H1 (cell line): ENCODE measurements at regions of chr1 and their contacts with region 1.

Region 1: GRCh38 chr1:26284597-26285360 is 4.9 kb downstream of the SH3BGRL3 start:
- DNase-seq: peak in 1 of 2 experiments; percentile 94
- H3K4me3 ChIP-seq: no peak overlapping the region
- H3K27ac ChIP-seq: no peak overlapping the region
- H3K4me1 ChIP-seq: peaks cover 8 to 32% (median 19%) of the 10 kb centered on the region in 4 experiments
- H3K27me3 ChIP-seq: no peaks in the 10 kb centered on the region
- CTCF ChIP-seq: peak in 2 of 3 experiments; percentile 93 to 97; a peak in 3 of 4 replicates
- EP300 ChIP-seq: no peak
- POLR2A ChIP-seq: no peak
- RAD21 ChIP-seq: peak; percentile 89 to 91

Region 2: DNA sequence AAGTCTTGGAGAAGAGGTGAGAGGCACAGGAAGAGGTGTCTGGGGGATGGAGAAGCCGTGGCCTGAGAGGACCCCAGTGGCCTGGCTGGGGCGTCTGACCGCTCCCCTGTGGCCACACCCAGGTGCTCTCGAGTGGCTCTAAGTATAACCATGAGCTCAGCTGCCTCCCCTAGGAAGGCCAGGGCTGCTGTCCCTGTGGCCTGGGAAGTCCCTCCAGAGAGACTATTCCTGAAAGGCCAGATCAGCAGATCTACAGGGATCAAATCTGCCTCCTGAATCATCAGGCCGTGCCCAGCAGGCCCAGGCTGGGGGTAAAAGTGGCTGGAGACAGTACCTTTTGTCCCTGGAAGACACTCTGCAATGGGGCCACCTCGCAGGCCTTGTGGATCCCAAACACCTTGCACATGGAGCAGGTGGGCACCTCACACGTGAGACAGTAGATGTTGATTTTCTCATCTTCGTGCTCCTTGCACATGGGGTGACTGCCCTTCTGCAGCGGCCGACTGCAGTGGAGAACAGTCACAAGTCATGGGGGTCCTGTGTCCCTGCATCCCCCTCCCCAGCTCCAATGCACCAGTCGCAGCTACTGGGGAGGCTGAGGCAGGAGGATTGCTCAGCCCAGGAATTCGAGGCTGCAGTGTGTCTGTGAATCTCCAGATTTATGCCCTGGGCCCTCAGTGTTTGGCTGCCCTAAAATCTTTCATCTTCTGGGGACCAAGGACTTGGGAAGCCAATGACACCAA is 223.8 kb before region 1 on chr1:
- CTCF ChIA-PET with region 1: no interaction called
- POLR2A ChIA-PET with region 1: no interaction called
- DNase-seq: no peak
- H3K4me3 ChIP-seq: no peak overlapping the region
- H3K27ac ChIP-seq: no peak overlapping the region
- H3K4me1 ChIP-seq: no peaks in the 10 kb centered on the region
- H3K27me3 ChIP-seq: peaks cover 0 to 2% (median 0%) of the 10 kb centered on the region in 4 experiments; a peak in 2 of 7 replicates
- CTCF ChIP-seq: no peak
- EP300 ChIP-seq: no peak
- POLR2A ChIP-seq: no peak
- RAD21 ChIP-seq: no peak

Region 3: GRCh38 chr1:26306290-26307229 is 21.8 kb after region 1 on chr1 and contains the start of gene UBXN11:
- CTCF ChIA-PET with region 1: interaction called, 1,530 read pairs
- POLR2A ChIA-PET with region 1: interaction called, 14 read pairs
- DNase-seq: peak; percentile 78 to 91
- H3K4me3 ChIP-seq: peak within 1 kb of the TSS; percentile 52 to 98 (median 96)
- H3K27ac ChIP-seq: peak within 1 kb of the TSS; percentile 75
- H3K4me1 ChIP-seq: peaks cover 0 to 5% (median 2%) of the 10 kb centered on the region in 4 experiments; a peak in 3 of 7 replicates
- H3K27me3 ChIP-seq: no peaks in the 10 kb centered on the region
- CTCF ChIP-seq: no peak
- EP300 ChIP-seq: no peak
- POLR2A ChIP-seq: peak in 1 of 2 experiments; percentile 55; a peak in 2 of 3 replicates
- RAD21 ChIP-seq: no peak
- total RNA-seq, gene UBXN11: 6.1 and 6.3 TPM in 2 replicates

Region 4: DNA sequence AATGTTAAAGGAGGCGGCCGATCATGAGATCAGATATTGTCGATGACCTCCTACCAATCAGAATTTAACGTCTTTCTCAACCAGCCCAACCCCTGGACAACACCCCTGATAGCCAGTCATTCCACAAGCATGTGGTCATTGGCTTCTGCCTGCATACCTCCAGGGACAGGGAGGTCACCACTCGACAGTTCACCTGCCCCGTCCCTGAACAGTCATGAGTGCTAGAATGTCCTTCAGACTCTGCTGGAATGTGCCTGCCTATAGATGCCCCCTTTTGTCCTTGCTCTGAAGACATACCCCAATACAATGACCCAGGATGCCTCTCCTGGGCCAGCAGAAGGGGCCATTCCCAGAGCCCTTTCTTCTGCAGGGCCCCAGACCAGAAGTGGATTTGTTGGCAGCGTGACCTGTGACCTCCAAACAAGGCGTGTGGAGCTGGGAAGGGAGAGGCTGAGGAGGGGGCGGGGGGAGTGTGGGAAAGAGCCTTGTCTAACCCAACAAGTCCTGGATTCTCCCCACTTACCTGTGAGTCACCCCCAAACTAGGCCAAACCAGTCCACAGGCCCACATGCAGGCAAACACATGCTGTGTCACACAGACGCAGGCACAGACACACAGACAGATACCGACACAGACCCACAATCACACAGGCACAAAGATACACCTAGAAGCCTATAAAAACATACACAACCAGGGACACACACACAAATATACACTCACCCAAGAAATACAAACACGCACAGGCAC is 67.0 kb after region 1 on chr1:
- CTCF ChIA-PET with region 1: interaction called, 27 read pairs
- POLR2A ChIA-PET with region 1: interaction called, 3 read pairs
- DNase-seq: no peak
- H3K4me3 ChIP-seq: no peak overlapping the region
- H3K27ac ChIP-seq: no peak overlapping the region
- H3K4me1 ChIP-seq: peaks cover 7 to 28% (median 10%) of the 10 kb centered on the region in 4 experiments
- H3K27me3 ChIP-seq: no peaks in the 10 kb centered on the region
- CTCF ChIP-seq: no peak
- EP300 ChIP-seq: no peak
- POLR2A ChIP-seq: no peak
- RAD21 ChIP-seq: no peak

Region 5: DNA sequence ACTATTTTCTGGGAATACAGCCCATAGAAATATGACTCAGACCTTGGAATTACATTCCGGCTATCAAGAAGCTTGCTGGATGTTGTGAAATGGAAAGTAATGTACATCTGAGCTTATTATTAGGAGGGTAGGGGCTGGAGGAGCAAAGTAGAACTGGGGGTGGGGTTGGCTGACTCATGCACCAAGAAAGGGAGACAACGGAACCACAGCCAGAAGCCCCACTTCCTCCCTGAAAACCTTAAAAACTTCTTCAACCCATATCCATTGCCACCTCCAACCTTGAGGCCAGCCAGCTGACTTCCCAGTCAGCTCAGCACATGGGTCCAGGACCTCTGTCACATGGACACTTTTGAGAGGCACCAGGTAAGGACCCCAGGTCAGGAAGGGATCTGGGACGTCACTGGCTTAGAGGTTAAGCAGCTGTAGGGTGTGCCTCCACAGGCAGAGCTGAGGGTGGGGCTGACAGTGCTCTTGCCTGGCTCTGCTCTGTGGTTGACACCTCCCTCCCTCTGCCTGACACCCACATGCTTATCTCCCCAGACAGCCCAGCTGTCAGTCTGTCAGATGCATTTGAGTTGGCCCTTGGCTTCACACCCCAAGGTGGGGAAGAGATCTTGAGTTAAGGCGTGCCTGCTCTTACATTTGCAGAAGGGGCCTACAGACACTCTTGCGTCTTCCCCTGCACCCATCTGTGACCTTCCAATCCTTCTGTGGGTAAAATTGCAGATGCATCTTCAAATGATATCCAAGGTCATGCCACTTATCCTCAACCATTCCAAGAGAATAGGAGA is 93.5 kb after region 1 on chr1:
- CTCF ChIA-PET with region 1: interaction called, 21 read pairs
- POLR2A ChIA-PET with region 1: interaction called, 3 read pairs
- DNase-seq: no peak
- H3K4me3 ChIP-seq: no peak overlapping the region
- H3K27ac ChIP-seq: no peak overlapping the region
- H3K4me1 ChIP-seq: peaks cover 0 to 2% (median 0%) of the 10 kb centered on the region in 4 experiments; a peak in 2 of 7 replicates
- H3K27me3 ChIP-seq: no peaks in the 10 kb centered on the region
- CTCF ChIP-seq: no peak
- EP300 ChIP-seq: no peak
- POLR2A ChIP-seq: no peak
- RAD21 ChIP-seq: no peak

Region 6: DNA sequence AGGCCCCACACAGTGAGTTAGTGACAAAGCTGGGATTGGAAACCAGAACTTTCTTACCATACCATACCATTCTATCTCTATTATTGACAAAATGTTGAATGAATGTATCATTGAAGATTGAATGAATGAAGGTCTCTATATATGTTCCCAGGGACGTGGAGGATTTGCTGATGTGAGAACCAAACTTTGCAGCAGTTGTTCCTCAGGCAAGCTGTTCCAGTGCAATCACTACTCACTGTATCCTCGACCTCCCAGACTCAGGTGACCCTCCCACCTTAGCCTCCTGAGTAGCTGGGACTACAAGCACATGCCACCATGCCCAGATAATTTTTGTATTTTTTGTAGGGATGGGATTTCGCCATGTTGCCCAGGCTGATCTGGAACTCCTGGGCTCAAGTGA is 114.3 kb after region 1 on chr1:
- CTCF ChIA-PET with region 1: interaction called, 23 read pairs
- POLR2A ChIA-PET with region 1: interaction called, 3 read pairs
- DNase-seq: no peak
- H3K4me3 ChIP-seq: no peak overlapping the region
- H3K27ac ChIP-seq: no peak overlapping the region
- H3K4me1 ChIP-seq: no peaks in the 10 kb centered on the region
- H3K27me3 ChIP-seq: no peaks in the 10 kb centered on the region
- CTCF ChIP-seq: no peak
- EP300 ChIP-seq: no peak
- POLR2A ChIP-seq: no peak
- RAD21 ChIP-seq: no peak

Region 7: GRCh38 chr1:26417111-26417759 is 132.5 kb after region 1 on chr1:
- CTCF ChIA-PET with region 1: interaction called, 20 read pairs
- POLR2A ChIA-PET with region 1: interaction called, 4 read pairs
- DNase-seq: peak; percentile 85 to 94
- H3K4me3 ChIP-seq: peak overlapping the region in 2 of 4 experiments; percentile 11 to 52; a peak in 4 of 8 replicates
- H3K27ac ChIP-seq: peak overlapping the region; percentile 63; the same call in 1 of the 2 replicates
- H3K4me1 ChIP-seq: peaks cover 24 to 47% (median 35%) of the 10 kb centered on the region in 4 experiments
- H3K27me3 ChIP-seq: no peaks in the 10 kb centered on the region
- CTCF ChIP-seq: peak; percentile 92 to 98 (median 96)
- EP300 ChIP-seq: no peak; a peak in 1 of 3 replicates
- POLR2A ChIP-seq: peak in 1 of 2 experiments; percentile 58; a peak in 1 of 3 replicates
- RAD21 ChIP-seq: peak; percentile 79 to 90

Region 8: GRCh38 chr1:26490158-26490557 is 205.4 kb after region 1 on chr1:
- CTCF ChIA-PET with region 1: no interaction called
- POLR2A ChIA-PET with region 1: no interaction called
- DNase-seq: no peak
- H3K4me3 ChIP-seq: no peak overlapping the region
- H3K27ac ChIP-seq: no peak overlapping the region
- H3K4me1 ChIP-seq: no peaks in the 10 kb centered on the region; a peak in 1 of 7 replicates
- H3K27me3 ChIP-seq: no peaks in the 10 kb centered on the region
- CTCF ChIP-seq: no peak
- EP300 ChIP-seq: no peak
- POLR2A ChIP-seq: no peak
- RAD21 ChIP-seq: no peak

Region 9: DNA sequence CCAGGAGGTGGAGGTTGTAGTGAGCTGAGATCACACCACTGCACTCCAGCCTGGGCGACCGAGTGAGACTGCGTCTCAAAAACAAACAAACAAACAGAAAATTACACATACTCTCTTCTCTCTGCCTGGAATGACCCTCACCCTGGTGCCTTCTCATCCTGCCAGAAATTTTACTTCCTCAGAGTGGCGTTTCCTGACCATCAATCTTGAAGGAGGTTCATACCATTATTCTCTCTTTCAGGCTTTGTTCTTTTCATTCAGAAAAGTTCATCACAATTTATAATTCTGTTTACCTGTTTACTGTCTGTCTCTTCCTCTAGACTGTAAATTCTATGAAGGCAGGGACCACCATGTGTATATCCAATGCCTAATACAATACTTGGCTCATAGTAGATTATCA is 324.1 kb after region 1 on chr1:
- CTCF ChIA-PET with region 1: no interaction called
- POLR2A ChIA-PET with region 1: no interaction called
- DNase-seq: no peak
- H3K4me3 ChIP-seq: no peak overlapping the region
- H3K27ac ChIP-seq: no peak overlapping the region
- H3K4me1 ChIP-seq: peaks cover 0 to 5% (median 3%) of the 10 kb centered on the region in 4 experiments; a peak in 4 of 7 replicates
- H3K27me3 ChIP-seq: no peaks in the 10 kb centered on the region
- CTCF ChIP-seq: no peak
- EP300 ChIP-seq: no peak
- POLR2A ChIP-seq: no peak
- RAD21 ChIP-seq: no peak; a peak in 2 of 4 replicates